Cardiac septum (tissue), 1 donor: ENCODE measurements at regions of chr11 and their contacts with region 1.

Region 1: GRCh38 chr11:109317726-109318125 is 104.3 kb upstream of the C11orf87 start:
- DNase-seq: no peak

Region 2: GRCh38 chr11:108985945-108986279 is 331.8 kb before region 1 on chr11:
- intact Hi-C with region 1: loop called (anchors 10 kb)
- DNase-seq: no peak